ENCODE measurements at regions of chr6 and their contacts with region 1.

Region 1: DNA sequence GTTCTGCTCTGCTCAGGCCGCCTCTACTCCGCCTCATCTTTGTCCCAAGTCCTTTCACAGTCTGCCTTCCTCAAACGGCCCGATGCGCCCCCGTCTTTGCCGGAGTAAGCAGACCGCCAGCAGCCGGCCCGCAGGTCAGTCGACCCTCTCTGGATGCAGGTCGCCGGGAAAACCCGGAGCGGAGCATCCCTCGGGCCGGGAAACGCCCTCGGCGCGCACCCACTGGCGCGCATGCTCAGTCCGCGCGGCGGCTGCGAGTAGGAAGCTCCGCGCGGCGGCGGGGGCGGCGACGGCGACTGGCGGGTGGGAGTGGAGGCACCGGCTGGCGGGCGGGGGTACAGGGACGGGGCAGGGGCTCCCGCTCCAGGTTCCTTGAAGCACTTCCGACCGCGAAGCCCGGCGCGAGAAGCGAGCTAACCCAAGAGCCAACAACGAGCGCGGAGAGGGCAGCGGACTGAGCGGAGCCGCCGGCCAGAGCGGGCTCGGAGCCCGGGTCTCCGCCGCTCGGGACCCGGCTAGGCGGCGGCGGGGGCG is at the start of gene LRRC1:
- ATAC-seq: peak; percentile 62 to 84 (median 81)
- H3K4me3 ChIP-seq: peak within 1 kb of the TSS; percentile 50 to 75 (median 63)
- H3K27ac ChIP-seq: peak within 1 kb of the TSS; percentile 54 to 61
- H3K4me1 ChIP-seq: peaks cover 5 to 6% of the 10 kb centered on the region in 2 donors
- total RNA-seq, gene LRRC1: 4.3 to 9.3 (median 7.8) TPM

Region 2: DNA sequence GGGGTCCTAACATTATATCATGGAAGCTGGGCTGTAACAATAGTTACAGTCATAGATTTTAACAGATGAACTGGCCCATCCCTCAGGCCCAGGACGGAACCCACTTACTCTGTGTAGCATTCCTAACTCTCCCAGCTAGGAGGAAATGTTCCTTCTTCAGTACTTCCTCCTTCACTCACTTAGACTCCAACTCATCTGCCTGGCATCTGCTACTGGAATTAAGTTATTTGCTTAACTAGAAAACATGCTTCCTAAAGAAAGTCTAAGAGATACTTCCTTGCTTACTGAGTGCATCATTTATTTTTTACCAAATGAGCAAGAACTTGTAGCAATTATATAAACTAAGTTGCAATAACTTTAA is 270.4 kb before region 1 on chr6:
- in situ Hi-C with region 1: no loop called
- ATAC-seq: peak in 3 of 8 experiments; percentile 42 to 60 (median 44)
- H3K4me3 ChIP-seq: no peak overlapping the region
- H3K27ac ChIP-seq: no peak overlapping the region
- H3K4me1 ChIP-seq: peaks cover 6 to 30% of the 10 kb centered on the region in 2 donors

Region 3: DNA sequence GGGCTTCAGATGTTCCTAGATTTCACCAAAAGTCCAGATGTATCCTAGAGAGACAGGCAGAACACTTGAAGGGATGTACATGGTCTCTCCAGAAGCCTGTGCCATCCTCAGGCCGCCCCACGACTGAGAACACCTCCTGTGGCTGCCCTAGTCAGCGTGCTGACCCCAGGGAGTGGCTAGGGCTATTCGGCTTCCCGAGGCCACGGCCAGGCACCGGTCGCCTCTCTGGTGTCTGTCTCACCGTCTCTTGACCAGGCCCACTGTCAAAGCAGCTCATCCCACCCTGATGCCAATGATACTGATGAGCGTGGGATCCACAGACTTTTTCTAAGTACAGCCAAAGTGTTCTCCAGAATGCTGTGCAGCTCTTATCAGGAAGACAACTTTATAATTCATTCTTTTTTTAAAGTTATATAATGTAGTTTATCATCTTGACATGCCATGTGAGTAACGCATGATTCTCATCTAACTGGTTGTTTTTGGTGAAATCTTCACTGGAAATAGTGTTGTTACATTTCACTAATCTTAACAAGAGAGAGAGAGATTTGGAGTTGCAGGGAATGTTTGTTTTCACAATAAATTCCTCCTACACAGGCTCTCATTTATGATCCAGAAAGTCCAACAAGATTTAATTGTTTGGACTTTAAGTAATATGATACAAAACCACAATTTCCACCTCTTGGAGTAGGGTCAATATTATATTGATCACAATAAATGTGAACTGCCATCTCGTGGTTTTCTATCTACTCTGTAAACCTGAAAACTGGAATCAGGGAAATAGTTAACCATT is 87.5 kb before region 1 on chr6:
- in situ Hi-C with region 1: no loop called
- ATAC-seq: no peak
- H3K4me3 ChIP-seq: no peak overlapping the region
- H3K27ac ChIP-seq: no peak overlapping the region
- H3K4me1 ChIP-seq: no peaks in the 10 kb centered on the region

Region 4: GRCh38 chr6:53926525-53926924 is 131.7 kb after region 1 on chr6:
- in situ Hi-C with region 1: loop called in 1 of 9 experiments (anchors 25 kb)
- ATAC-seq: no peak
- H3K4me3 ChIP-seq: no peak overlapping the region
- H3K27ac ChIP-seq: no peak overlapping the region
- H3K4me1 ChIP-seq: peaks cover 0 to 6% of the 10 kb centered on the region in 2 donors

Region 5: DNA sequence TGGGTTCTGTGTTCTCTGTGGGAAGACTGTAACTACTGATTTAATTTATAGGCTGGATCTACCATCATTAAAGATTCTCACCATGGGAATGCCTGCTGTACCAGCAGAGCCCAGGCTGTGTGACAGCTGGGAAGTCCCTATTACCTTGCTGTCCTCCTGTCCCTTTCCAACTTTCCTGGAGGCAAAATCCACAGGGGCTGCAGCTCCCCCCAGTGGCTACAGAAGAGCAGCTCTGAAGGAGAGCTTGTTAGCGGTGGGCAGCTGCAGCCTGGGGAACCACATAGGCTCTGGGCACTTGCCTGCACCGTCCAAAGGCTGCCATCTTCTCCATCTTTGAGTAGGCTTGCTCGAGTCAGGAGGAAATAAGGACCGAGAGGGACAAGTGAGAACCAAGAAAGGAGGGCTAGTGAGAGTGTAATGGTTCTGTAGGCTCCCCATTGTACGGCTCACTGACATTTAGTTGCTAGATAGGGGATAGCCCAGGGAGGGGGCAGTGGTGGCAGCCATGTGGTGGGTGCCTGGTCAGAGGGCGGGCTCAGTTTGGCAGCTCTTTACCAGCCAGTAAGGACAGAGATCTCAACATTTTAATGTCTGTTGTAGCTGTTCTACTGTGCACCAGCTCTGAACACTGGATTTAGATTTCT is 161.4 kb after region 1 on chr6:
- in situ Hi-C with region 1: loop called in 1 of 9 experiments (anchors 25 kb)
- ATAC-seq: peak; percentile 96 to 100 (median 100)
- H3K4me3 ChIP-seq: no peak overlapping the region
- H3K27ac ChIP-seq: no peak overlapping the region
- H3K4me1 ChIP-seq: no peaks in the 10 kb centered on the region

Region 6: GRCh38 chr6:54431466-54431865 is 636.7 kb after region 1 on chr6:
- in situ Hi-C with region 1: no loop called
- ATAC-seq: no peak
- H3K4me3 ChIP-seq: no peak overlapping the region
- H3K27ac ChIP-seq: no peak overlapping the region
- H3K4me1 ChIP-seq: no peaks in the 10 kb centered on the region